Gastrocnemius medialis (tissue), 4 donors: ENCODE measurements at regions of chr21 and their contacts with region 1.

Region 1: DNA sequence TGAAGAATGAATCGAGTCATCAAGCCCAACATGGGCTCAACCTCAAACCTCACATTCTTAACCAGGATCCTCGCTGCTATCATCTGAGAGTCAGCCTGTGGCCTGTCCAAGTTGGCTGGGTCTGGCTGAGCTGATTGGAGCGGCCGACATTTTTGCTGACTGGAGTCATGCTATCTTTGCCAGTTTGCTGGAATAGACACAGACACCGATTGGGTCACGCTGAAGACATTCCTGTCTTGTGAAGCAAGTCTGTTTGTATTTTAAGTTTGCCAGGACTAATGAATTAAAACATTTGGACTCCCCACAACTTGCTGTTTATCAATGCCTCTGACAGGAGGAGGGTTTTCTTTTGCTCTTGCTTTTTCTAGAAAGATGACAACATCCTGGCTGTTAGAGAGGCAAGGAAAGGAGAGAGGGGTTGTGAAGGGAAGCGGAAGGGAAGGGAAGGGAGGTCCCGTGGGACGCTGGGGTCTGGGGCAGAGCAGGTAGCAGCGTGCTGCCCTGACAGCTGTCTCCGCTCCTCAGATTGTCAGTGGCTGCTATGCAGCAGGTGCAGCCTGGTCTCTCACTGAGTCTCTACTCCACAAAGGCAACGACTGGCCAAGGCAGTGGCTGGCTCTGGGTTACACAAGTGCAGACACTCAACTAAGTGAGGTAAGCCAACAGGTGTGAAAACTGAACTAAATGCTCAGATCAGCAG is at the start of gene MAP3K7CL:
- DNase-seq: peak; percentile 81 to 88
- ATAC-seq: peak; percentile 93 to 96
- H3K4me3 ChIP-seq: peak within 1 kb of the TSS; percentile 1 to 49 (median 26)
- H3K27ac ChIP-seq: peak within 1 kb of the TSS; percentile 84 to 91 (median 90)
- H3K4me1 ChIP-seq: peaks cover 11 to 12% of the 10 kb centered on the region in 2 donors
- H3K27me3 ChIP-seq: no peaks in the 10 kb centered on the region
- CTCF ChIP-seq: no peak
- POLR2A ChIP-seq: no peak
- total RNA-seq, gene MAP3K7CL: 4.3 to 17.4 (median 15.5) TPM in 3 of 4 donors, not detected in the other

Region 2: DNA sequence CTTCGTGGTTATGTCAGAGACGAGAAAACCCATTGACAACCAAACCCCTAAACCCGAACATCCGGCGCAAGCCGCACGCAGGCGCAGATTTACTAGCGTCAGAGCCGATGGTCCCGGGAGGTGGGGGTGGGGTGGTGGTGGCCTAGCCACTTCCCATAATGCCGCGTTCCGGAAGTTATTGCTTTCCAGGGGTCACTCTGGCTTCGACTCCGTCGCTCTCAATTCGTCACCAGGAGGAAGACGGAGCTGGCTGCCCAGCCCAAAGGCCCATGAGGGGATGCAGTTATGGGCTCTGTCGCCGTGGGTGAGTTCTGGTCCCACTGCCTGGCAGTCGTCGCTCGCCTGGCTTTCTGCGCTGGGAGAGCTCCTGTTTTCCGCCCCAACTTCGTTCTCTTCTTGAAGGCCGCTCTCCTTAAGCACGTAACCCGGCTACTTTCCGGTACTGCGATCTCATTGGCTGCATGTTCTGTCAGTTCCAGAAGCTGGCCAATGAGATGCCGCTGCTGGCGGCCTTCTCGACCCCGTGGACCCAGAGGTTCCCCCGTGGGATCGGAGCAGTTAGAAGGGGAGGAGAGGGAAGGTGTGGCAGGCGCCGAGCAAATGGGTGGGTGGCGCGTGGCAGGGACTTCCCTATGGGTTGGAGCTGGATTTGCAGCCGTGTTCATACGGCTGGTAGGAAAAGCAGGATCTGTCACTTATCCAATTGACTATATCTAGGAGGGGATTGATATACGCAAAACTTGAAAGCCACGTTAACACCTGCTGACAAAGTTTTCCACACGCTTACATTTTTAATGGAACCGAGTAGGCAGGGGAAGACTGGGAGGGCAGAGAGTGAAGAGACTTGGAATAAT is 105.7 kb before region 1 on chr21 and contains the start of gene USP16:
- in situ Hi-C with region 1: no loop called
- intact Hi-C with region 1: no loop called
- DNase-seq: peak; percentile 96 to 98
- ATAC-seq: peak; percentile 99 to 100
- H3K4me3 ChIP-seq: peak within 1 kb of the TSS; percentile 66 to 87 (median 79)
- H3K27ac ChIP-seq: peak within 1 kb of the TSS; percentile 95 to 99 (median 97)
- H3K4me1 ChIP-seq: peaks cover 19 to 28% of the 10 kb centered on the region in 2 donors
- H3K27me3 ChIP-seq: no peaks in the 10 kb centered on the region
- CTCF ChIP-seq: peak in 4 of 5 experiments; percentile 35 to 45 (median 41)
- POLR2A ChIP-seq: peak; percentile 37 to 41
- total RNA-seq, gene USP16: 25.0 to 37.2 (median 32.1) TPM

Region 3: DNA sequence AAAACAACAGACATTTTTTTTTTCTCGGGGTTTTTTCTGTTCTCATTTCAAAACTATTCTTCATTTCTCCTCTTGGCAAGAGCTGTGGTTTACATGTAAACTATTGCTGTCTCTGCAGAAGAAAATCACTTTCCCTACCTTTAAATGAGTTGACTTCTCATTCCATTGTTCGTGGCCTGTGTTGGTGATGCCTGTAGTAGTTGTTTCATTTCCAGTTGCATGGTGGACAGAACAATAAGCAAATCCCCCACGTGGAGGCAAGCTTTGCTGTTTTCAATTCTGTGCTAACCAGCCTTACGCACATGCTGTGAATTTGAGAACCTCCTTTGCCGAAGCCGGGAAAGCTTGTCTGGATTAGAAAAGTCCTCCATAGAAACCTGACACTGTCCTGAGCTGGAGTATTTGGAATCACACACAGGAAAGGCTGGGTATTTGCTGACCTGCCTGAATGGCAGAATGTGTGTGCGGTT is 26.1 kb before region 1 on chr21:
- in situ Hi-C with region 1: no loop called
- intact Hi-C with region 1: loop called (anchors 2 kb)
- DNase-seq: peak; percentile 17 to 53
- ATAC-seq: peak; percentile 93 to 96
- H3K4me3 ChIP-seq: no peak overlapping the region
- H3K27ac ChIP-seq: peak overlapping the region; percentile 2 to 44 (median 20)
- H3K4me1 ChIP-seq: peaks cover 11 to 13% of the 10 kb centered on the region in 2 donors
- H3K27me3 ChIP-seq: no peaks in the 10 kb centered on the region
- CTCF ChIP-seq: peak in 1 of 5 experiments; percentile 27
- POLR2A ChIP-seq: no peak